ENCODE measurements at regions of chr5 and their contacts with region 1.

Region 1: GRCh38 chr5:53035868-53036381 is 46.8 kb downstream of the ITGA2 start:
- DNase-seq: peak; percentile 52
- ATAC-seq: no peak
- H3K4me3 ChIP-seq: no peak overlapping the region
- H3K27ac ChIP-seq: peak overlapping the region; percentile 97
- H3K4me1 ChIP-seq: peaks cover 67% of the 10 kb centered on the region
- H3K27me3 ChIP-seq: no peaks in the 10 kb centered on the region
- CTCF ChIP-seq: peak; percentile 54

Region 2: GRCh38 chr5:52502460-52502999 is 533.4 kb before region 1 on chr5:
- CTCF ChIA-PET with region 1: no interaction called
- POLR2A ChIA-PET with region 1: no interaction called
- intact Hi-C with region 1: no loop called
- DNase-seq: no peak
- ATAC-seq: no peak
- H3K4me3 ChIP-seq: no peak overlapping the region
- H3K27ac ChIP-seq: no peak overlapping the region
- H3K4me1 ChIP-seq: no peaks in the 10 kb centered on the region
- H3K27me3 ChIP-seq: peaks cover 26% of the 10 kb centered on the region
- CTCF ChIP-seq: no peak

Region 3: GRCh38 chr5:53095931-53096525 is 60.1 kb after region 1 on chr5:
- CTCF ChIA-PET with region 1: interaction called, 13 read pairs
- POLR2A ChIA-PET with region 1: no interaction called
- intact Hi-C with region 1: no loop called
- DNase-seq: peak; percentile 80
- ATAC-seq: peak; percentile 41
- H3K4me3 ChIP-seq: no peak overlapping the region
- H3K27ac ChIP-seq: no peak overlapping the region
- H3K4me1 ChIP-seq: peaks cover 8% of the 10 kb centered on the region; the same call in 1 of the 2 replicates
- H3K27me3 ChIP-seq: no peaks in the 10 kb centered on the region
- CTCF ChIP-seq: peak; percentile 87

Measured in PC-3 (cell line).